PC-9 (cell line): ENCODE measurements at regions of chr22 and their contacts with region 1.

Region 1: GRCh38 chr22:34847072-34847471 is 218.9 kb upstream of the ISX start:
- DNase-seq: no peak
- H3K4me3 ChIP-seq: no peak overlapping the region
- H3K27ac ChIP-seq: no peak overlapping the region
- H3K4me1 ChIP-seq: no peaks in the 10 kb centered on the region
- H3K27me3 ChIP-seq: peaks cover 10% of the 10 kb centered on the region; the same call in 1 of the 2 replicates
- CTCF ChIP-seq: no peak

Region 2: GRCh38 chr22:34986523-34986922 is 139.5 kb after region 1 on chr22:
- CTCF ChIA-PET with region 1: no interaction called
- POLR2A ChIA-PET with region 1: no interaction called
- intact Hi-C with region 1: no loop called
- DNase-seq: no peak
- H3K4me3 ChIP-seq: no peak overlapping the region
- H3K27ac ChIP-seq: no peak overlapping the region
- H3K4me1 ChIP-seq: no peaks in the 10 kb centered on the region
- H3K27me3 ChIP-seq: peaks cover 29% of the 10 kb centered on the region
- CTCF ChIP-seq: no peak

Region 3: DNA sequence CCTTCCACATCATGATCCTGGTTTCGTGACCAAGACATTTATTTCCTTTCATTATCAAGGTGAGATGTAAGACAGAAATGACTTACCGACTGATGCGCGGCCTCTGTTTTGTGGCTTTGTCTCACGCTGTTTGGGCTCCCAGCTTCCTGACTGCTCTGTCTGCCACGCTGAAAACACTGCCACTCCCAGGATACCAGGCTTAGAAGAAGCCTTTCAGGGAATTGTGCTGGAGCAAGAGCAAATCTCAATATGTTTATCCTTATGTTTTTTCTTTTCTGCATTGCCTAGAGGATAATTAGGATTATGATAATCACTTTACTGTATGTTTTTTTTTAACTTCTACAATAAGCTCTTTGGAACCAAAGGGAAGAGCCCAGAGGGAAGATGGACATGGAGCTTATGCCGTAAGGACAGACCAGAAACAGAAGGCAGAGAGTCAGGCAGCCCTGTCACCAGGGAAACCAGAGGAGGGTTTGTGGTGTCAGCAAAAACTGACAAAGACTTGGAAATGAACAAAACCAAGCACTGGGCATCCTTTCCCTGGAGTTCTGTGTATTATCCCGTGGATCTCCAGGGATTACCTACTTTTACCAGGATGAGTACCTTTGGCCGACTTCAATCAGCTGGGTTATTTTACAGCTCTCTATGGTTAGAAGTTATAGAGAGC is 150.7 kb after region 1 on chr22:
- CTCF ChIA-PET with region 1: interaction called, 15 read pairs
- POLR2A ChIA-PET with region 1: no interaction called
- intact Hi-C with region 1: no loop called
- DNase-seq: no peak
- H3K4me3 ChIP-seq: no peak overlapping the region
- H3K27ac ChIP-seq: no peak overlapping the region
- H3K4me1 ChIP-seq: no peaks in the 10 kb centered on the region
- H3K27me3 ChIP-seq: peaks cover 29% of the 10 kb centered on the region; the same call in 1 of the 2 replicates
- CTCF ChIP-seq: no peak